Colonic mucosa (tissue), 4 donors: ENCODE measurements at regions of chr12 and their contacts with region 1.

Region 1: DNA sequence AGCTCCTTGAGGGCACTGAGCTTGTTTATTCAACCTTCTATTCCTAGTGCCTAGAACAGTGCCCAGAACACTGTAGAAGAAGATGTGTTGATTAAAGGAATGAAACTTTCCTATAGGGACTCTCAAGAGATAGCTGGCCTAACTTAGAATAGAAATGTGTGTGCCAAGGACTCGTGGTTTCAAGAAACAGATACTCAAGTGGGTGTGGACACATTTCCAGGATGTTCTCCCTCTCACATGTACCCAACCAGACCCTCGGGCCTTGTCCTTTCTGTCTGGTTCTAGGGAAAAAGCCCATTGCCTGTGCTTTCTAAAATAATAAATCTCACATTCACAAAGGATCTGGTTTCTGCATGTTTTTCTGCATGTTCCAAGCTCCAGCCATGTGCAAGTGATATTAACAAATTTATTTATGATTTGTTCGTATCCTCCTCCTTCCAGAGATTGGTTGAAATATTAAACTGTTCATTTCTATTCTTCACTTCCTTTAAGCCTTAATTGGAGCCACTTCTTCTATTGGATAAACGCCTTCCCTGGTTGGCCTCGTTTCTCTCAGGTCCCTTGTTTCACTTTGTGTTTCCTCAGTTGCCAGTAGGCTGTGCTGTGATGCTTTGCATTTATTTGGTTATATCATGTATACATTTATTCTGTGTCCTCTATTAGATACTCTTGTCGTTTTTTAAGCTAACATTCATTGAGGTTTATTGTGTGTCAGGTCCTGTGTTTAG is 89.8 kb downstream of the CRADD start:
- DNase-seq: peak; percentile 40
- H3K4me3 ChIP-seq: no peak overlapping the region
- H3K27ac ChIP-seq: peak overlapping the region; percentile 6
- H3K4me1 ChIP-seq: no peaks in the 10 kb centered on the region
- H3K27me3 ChIP-seq: no peaks in the 10 kb centered on the region
- CTCF ChIP-seq: peak; percentile 50

Region 2: DNA sequence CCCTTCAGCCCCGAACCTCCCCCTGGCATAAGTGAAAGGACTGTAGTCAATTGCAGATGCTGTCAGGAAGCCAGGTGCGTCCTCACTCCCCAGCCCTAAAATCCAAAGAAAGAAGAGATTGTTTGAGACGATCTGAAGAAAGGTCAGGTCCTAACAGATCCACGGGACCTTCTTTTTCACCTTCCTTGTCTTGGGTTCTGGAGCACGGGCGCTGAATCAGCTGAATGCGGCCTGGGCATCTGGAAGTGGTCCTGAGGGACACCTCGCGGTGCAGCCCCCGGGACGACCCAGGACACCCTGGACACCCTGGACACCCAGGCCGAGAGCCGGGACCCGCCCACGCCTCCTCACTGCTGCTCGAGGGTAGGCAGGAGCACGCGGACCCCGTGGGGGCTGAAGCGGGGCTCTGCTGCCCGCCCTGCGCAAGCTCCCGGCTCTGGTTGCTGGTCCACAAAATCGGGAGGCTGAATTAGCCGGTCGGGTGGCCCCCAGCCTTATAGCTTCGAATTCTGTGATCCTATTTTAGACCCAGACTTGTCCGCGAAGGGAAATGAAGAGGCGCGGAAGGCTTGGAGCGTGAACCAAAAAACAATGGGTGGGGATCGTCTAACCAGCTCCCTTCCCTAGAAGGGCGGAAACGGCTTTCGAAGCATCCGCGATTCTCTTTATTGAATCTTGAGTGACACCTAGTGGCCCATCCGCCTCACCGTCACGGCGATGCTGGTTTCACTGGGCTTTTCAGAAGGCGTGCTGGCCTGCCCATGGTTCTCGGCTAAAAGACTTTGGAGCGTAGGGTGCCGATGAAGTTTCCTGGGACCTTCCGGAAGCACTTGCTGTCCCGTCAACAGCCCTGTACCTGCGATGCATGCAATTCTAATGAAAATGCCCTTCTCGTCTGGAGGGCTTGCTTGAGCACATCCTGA is 335.0 kb after region 1 on chr12:
- intact Hi-C with region 1: loop called (anchors 5 kb)
- DNase-seq: peak; percentile 91
- H3K4me3 ChIP-seq: peak overlapping the region; percentile 53
- H3K27ac ChIP-seq: no peak overlapping the region
- H3K4me1 ChIP-seq: no peaks in the 10 kb centered on the region
- H3K27me3 ChIP-seq: no peaks in the 10 kb centered on the region
- CTCF ChIP-seq: peak; percentile 75